Activated CD4-positive, alpha-beta T cell treated with anti-CD3 and anti-CD28 coated beads for 36 hours (primary cell): ENCODE measurements at regions of chr10 and their contacts with region 1.

Region 1: GRCh38 chr10:32621969-32622368 is 176.0 kb downstream of the CCDC7 start:
- DNase-seq: no peak
- ATAC-seq: no peak
- H3K4me3 Mint-ChIP-seq: no peak overlapping the region
- H3K27ac Mint-ChIP-seq: no peak overlapping the region
- H3K4me1 Mint-ChIP-seq: no peaks in the 10 kb centered on the region
- H3K27me3 Mint-ChIP-seq: no peaks in the 10 kb centered on the region

Region 2: DNA sequence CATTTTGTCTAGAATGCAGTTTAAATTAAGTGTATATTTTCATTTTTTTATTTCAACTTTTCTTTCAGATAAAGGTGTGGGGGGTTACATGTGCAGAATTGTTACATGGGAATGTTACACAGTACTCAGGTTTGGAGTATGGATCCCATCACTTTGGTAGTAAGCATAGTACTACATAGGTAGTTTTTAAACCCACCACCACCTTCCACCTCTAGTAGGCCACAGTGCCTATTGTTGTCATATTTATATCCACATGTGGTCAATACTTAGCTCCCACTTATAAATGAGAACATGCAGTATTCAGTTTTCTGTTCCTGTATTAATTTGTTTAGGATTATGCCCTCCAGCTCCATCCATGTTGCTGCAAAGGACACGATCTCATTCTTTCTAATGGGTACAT is 24.6 kb after region 1 on chr10:
- CTCF ChIA-PET with region 1: no interaction called
- POLR2A ChIA-PET with region 1: no interaction called
- intact Hi-C with region 1: loop called in 1 of 2 experiments (anchors 2 kb)
- DNase-seq: no peak
- ATAC-seq: no peak
- H3K4me3 Mint-ChIP-seq: no peak overlapping the region
- H3K27ac Mint-ChIP-seq: no peak overlapping the region
- H3K4me1 Mint-ChIP-seq: peaks cover 9% of the 10 kb centered on the region
- H3K27me3 Mint-ChIP-seq: no peaks in the 10 kb centered on the region